Activated B cell treated with CpG ODN at 0.5 μM for 24 hours (primary cell): ENCODE measurements at regions of chr2 and their contacts with region 1.

Region 1: GRCh38 chr2:56183643-56184499 is at the start of gene CCDC85A:
- DNase-seq: peak; percentile 58
- ATAC-seq: peak; percentile 86
- H3K4me3 Mint-ChIP-seq: peak within 1 kb of the TSS; percentile 59
- H3K27ac Mint-ChIP-seq: no peak within 1 kb of the TSS
- H3K4me1 Mint-ChIP-seq: peaks cover 13% of the 10 kb centered on the region
- H3K27me3 Mint-ChIP-seq: peaks cover 58% of the 10 kb centered on the region
- CTCF ChIP-seq: no peak
- total RNA-seq, gene CCDC85A: not detected in 2 replicates

Region 2: DNA sequence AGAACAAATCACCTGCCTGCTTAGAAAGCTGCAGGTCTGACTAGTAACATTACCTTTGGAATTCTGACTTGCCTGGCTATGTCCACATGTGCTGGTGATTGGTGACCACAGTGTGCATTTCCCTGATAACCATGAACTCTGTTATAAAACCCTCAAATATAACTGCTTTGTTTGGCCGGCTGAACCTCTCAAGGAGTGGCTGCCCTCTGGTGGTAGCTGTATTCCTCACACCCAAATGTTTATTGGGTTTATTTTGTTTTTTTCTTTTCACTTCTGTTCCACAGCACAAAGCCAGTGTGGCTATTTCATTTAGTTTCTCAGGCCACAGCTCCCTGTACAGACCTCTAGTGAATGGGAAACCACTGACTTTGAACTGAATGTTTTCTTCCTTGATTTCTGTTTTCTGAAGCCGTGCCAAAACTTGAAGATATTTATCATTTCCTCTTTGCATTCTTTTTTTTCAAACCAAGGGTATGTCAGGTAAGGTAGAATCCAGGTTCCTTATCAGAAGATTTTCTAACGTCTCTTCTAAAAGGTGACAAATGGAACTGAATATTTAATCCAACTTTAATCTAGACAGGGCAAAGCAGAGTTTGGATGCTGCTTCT is 1313.7 kb after region 1 on chr2:
- CTCF ChIA-PET with region 1: interaction called, 8 read pairs
- POLR2A ChIA-PET with region 1: no interaction called
- intact Hi-C with region 1: loop called (anchors 1 kb)
- DNase-seq: no peak
- ATAC-seq: no peak
- H3K4me3 Mint-ChIP-seq: no peak overlapping the region
- H3K27ac Mint-ChIP-seq: no peak overlapping the region
- H3K4me1 Mint-ChIP-seq: peaks cover 2% of the 10 kb centered on the region
- H3K27me3 Mint-ChIP-seq: no peaks in the 10 kb centered on the region
- CTCF ChIP-seq: peak; percentile 21